ENCODE measurements at regions of chr17 and their contacts with region 1.

Region 1: DNA sequence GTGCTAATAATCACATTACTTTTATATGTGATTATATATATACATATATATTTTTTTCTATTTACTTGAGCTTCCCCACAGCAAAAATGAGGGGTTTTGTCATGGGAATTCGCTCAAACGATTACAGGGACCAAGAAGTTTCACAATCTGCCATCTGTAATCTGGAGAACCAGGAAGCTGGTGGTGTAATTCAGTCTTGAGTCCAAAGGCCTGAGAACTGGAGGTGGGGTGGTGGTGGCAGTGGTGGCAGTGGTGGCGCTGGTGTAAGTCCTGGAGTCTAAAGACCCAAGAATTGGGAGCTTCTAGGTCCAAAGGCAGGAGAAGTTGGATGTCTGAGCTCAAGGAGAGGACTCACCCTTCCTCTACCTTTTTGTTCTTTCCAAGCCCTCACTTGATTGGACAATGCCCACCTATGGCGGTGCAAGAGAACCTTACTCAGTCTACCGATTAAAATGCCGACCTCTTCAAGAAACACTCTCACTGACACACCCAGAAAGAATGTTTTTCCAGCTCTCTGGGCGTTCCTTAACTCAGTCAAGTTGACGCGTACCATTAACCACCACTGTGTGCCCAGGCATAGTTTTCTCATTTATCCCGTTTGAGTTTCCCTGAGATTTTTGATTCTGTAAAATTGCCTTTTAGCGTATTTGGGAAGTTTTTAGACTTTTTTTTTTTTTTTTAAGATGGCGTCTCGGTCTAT is 31.9 kb downstream of the POLR2A start:
- DNase-seq: no peak
- H3K4me3 ChIP-seq: no peak overlapping the region
- H3K27ac ChIP-seq: no peak overlapping the region
- H3K4me1 ChIP-seq: peaks cover 0 to 6% (median 0%) of the 10 kb centered on the region in 4 donors
- H3K27me3 ChIP-seq: no peaks in the 10 kb centered on the region
- CTCF ChIP-seq: no peak
- EP300 ChIP-seq: no peak
- POLR2A ChIP-seq: no peak

Region 2: DNA sequence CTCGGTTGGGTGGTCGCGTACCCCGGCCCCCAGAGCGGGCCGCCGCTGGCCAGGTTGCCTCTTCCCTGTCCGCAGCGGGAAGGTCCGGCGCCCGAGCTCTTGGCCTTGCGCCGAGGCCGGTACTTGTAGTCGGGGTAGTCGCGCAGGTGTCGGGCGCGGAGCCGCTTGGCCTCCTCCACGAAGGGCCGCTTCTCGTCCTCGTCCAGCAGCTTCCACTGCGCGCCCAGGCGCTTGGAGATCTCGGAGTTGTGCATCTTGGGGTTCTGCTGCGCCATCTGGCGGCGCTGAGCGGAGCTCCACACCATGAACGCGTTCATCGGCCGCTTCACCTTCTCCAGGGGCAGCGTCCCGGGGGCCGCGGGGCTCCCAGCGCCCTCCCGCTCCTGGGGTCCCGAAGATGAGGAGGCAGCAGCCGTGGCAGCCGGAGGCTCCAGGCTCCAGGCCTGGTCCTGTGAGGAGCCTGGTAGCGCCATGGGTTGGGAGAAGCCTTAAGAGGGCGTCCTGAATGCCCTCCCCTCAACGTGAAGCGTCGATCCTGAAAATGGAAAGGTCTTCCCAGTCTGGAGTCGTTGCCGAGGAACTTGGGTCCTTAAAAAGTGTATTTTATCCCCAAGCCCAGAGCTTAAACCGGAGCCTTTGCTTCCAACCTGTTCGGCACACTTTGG is 73.3 kb after region 1 on chr17:
- intact Hi-C with region 1: loop called (anchors 2 kb)
- DNase-seq: peak; percentile 96
- H3K4me3 ChIP-seq: peak overlapping the region; percentile 61 to 64 (median 62)
- H3K27ac ChIP-seq: peak overlapping the region; percentile 78 to 86 (median 83)
- H3K4me1 ChIP-seq: peaks cover 34 to 62% (median 57%) of the 10 kb centered on the region in 4 donors
- H3K27me3 ChIP-seq: no peaks in the 10 kb centered on the region
- CTCF ChIP-seq: peak; percentile 89 to 97 (median 89)
- EP300 ChIP-seq: no peak
- POLR2A ChIP-seq: no peak

Measured in esophagus muscularis mucosa (tissue), 4 donors.